Esophagus muscularis mucosa (tissue), 4 donors: ENCODE measurements at regions of chr2 and their contacts with region 1.

Region 1: DNA sequence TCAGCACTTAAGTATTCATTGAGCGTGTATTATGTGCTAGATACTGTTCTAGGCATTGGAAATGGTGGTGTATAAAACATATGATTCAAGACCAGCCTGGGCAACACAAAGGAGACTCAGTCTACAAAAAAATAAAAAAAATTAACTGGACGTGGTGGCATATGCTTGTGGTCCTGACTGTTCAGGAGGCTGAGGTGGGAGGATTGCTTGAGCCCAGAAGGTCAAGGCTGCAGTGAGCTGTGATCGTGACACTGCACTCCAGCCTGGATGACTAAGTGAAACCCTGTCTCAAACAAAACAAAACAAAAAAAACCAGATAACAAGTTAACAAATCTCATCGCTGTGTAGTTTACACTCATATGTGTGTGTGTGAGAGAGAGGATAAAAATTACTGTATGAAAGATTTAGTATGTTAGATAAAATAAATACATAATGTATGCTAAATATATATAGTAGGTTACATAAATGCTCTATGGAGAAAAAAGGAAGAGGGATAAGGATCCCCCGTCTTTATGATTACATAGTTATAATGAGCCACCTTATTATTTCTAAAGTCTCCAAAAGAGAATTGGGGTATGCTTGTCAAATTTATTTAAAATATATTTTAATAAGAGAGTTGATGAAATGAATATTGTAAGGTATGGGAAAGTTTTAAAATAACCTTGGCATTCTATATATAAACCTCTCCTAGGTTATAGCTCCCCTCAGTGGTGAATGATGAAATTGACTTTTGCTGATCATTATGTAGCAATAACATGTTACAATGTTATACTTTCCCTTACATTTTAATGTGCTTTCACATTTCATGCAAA is 69.2 kb downstream of the EHBP1 start:
- DNase-seq: no peak
- H3K4me3 ChIP-seq: no peak overlapping the region
- H3K27ac ChIP-seq: peak overlapping the region; percentile 0 to 32 (median 14)
- H3K4me1 ChIP-seq: peaks cover 0 to 40% (median 38%) of the 10 kb centered on the region in 4 donors
- H3K27me3 ChIP-seq: no peaks in the 10 kb centered on the region
- CTCF ChIP-seq: peak; percentile 74 to 84 (median 82)
- EP300 ChIP-seq: no peak
- POLR2A ChIP-seq: no peak

Region 2: GRCh38 chr2:62456721-62457539 is 317.8 kb before region 1 on chr2:
- intact Hi-C with region 1: loop called (anchors 2 kb)
- DNase-seq: no peak
- H3K4me3 ChIP-seq: peak overlapping the region; percentile 58 to 80 (median 70)
- H3K27ac ChIP-seq: peak overlapping the region; percentile 79 to 87 (median 83)
- H3K4me1 ChIP-seq: peaks cover 13 to 46% (median 36%) of the 10 kb centered on the region in 4 donors
- H3K27me3 ChIP-seq: no peaks in the 10 kb centered on the region
- CTCF ChIP-seq: peak; percentile 94 to 100 (median 98)
- EP300 ChIP-seq: no peak
- POLR2A ChIP-seq: no peak